ENCODE measurements at regions of chr11 and their contacts with region 1.

Region 1: GRCh38 chr11:44775366-44775984 is 48.7 kb downstream of the TSPAN18 start:
- DNase-seq: peak; percentile 74
- ATAC-seq: peak; percentile 77
- H3K4me3 Mint-ChIP-seq: no peak overlapping the region
- H3K27ac Mint-ChIP-seq: no peak overlapping the region
- H3K4me1 Mint-ChIP-seq: no peaks in the 10 kb centered on the region
- H3K27me3 Mint-ChIP-seq: peaks cover 4% of the 10 kb centered on the region
- CTCF ChIP-seq: peak; percentile 81

Region 2: DNA sequence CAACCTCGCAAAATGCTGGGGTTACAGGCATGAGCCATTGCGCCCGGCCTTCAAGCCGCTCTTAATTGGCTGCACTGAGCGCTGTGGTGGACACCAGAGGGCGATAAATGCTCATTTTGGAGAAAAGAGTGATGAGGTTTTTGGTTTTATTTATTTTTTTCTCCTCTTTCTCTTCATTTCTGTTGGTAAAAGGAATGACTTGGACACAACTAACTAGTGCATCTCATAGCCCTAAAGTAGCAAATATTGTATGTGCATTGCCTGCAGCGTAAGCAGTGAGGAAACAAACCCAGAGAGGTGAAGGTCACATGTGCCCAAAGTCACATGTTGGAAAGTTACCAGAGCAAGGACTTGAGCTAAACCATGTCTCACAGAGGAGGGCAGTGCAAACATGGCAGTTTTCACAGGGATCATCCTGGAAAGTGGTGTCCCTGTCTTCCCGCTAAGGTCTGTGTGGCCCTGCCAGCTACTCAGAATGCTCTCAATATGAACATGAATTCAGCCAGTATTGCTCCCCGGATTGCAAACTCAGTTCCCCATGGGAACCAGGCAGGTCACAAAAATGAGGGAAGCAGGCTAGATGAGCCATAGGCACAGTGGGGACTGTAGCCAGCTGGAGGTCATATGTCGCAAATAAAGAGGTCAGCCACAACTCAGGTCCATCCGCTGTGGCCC is 218.6 kb before region 1 on chr11:
- CTCF ChIA-PET with region 1: interaction called, 10 read pairs
- POLR2A ChIA-PET with region 1: no interaction called
- intact Hi-C with region 1: loop called (anchors 5 kb)
- DNase-seq: peak; percentile 85
- ATAC-seq: peak; percentile 66
- H3K4me3 Mint-ChIP-seq: no peak overlapping the region
- H3K27ac Mint-ChIP-seq: peak overlapping the region; percentile 40
- H3K4me1 Mint-ChIP-seq: peaks cover 30% of the 10 kb centered on the region
- H3K27me3 Mint-ChIP-seq: no peaks in the 10 kb centered on the region
- CTCF ChIP-seq: peak; percentile 80

Region 3: GRCh38 chr11:44621140-44621681 is 154.3 kb before region 1 on chr11:
- CTCF ChIA-PET with region 1: interaction called, 13 read pairs
- POLR2A ChIA-PET with region 1: no interaction called
- intact Hi-C with region 1: loop called (anchors 10 kb)
- DNase-seq: peak; percentile 65
- ATAC-seq: peak; percentile 43
- H3K4me3 Mint-ChIP-seq: no peak overlapping the region
- H3K27ac Mint-ChIP-seq: no peak overlapping the region
- H3K4me1 Mint-ChIP-seq: peaks cover 20% of the 10 kb centered on the region
- H3K27me3 Mint-ChIP-seq: no peaks in the 10 kb centered on the region
- CTCF ChIP-seq: peak; percentile 86

Region 4: DNA sequence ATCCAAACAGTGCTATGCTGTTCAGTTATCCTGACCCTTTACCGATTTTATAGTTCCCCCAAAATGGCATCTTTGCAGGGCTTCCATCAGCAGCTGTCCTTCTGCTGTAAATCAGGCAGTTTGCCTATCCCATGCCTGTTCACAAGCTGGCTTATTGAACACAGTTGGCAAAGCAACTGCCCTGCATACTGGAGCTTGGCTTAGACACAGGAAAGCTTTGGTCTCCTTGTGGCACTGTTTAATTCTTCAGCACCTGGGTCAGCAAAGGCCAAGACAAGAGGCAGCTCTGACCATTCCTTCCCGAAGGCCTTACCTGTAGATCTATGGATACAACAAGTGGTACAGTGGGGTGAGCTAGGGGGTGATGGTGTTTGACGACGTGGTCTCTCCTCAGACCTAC is 16.5 kb before region 1 on chr11:
- CTCF ChIA-PET with region 1: interaction called, 10 read pairs
- POLR2A ChIA-PET with region 1: no interaction called
- intact Hi-C with region 1: no loop called
- DNase-seq: no peak
- ATAC-seq: no peak
- H3K4me3 Mint-ChIP-seq: no peak overlapping the region
- H3K27ac Mint-ChIP-seq: no peak overlapping the region
- H3K4me1 Mint-ChIP-seq: peaks cover 7% of the 10 kb centered on the region
- H3K27me3 Mint-ChIP-seq: peaks cover 3% of the 10 kb centered on the region
- CTCF ChIP-seq: no peak

Region 5: GRCh38 chr11:44795803-44796535 is 20.5 kb after region 1 on chr11:
- CTCF ChIA-PET with region 1: interaction called, 10 read pairs
- POLR2A ChIA-PET with region 1: no interaction called
- intact Hi-C with region 1: no loop called
- DNase-seq: no peak
- ATAC-seq: no peak
- H3K4me3 Mint-ChIP-seq: no peak overlapping the region
- H3K27ac Mint-ChIP-seq: no peak overlapping the region
- H3K4me1 Mint-ChIP-seq: no peaks in the 10 kb centered on the region
- H3K27me3 Mint-ChIP-seq: no peaks in the 10 kb centered on the region
- CTCF ChIP-seq: no peak

Region 6: DNA sequence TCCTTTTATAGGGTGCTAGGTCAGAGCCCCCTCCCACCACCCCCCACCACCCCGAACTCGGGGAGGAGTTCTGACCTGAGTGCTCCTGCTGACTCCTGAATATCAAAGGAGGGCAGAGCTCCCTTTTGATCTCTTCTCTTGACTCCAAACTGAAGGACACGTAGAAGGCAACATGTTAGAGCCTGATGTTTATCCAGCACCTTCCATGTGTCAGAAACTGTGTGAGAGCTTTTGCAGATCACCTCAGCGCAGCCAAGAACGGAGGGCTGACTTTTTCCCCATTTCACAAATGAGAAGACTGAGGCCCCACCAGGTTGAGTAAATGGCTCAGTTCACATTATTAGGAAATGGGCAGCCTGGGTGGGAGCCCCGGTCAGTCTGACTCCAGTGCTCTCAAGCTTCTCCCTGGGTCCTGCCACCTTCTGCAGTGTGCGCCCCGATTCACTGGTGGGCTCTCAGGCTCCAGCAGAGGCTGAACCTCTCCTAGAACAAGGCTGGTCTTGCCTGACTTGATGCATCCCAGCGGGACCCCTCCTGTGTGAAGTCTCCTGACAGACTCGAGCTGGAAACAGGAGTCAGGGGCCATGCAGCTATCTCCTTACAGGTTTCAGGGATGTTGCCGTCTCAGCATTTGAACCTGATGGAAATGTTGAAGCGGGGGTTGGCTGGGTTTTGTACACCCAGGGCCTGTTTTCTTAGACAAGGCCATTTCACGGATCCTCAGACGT is 49.7 kb after region 1 on chr11:
- CTCF ChIA-PET with region 1: no interaction called
- POLR2A ChIA-PET with region 1: no interaction called
- intact Hi-C with region 1: no loop called
- DNase-seq: no peak
- ATAC-seq: no peak
- H3K4me3 Mint-ChIP-seq: no peak overlapping the region
- H3K27ac Mint-ChIP-seq: no peak overlapping the region
- H3K4me1 Mint-ChIP-seq: no peaks in the 10 kb centered on the region
- H3K27me3 Mint-ChIP-seq: no peaks in the 10 kb centered on the region
- CTCF ChIP-seq: no peak

Region 7: DNA sequence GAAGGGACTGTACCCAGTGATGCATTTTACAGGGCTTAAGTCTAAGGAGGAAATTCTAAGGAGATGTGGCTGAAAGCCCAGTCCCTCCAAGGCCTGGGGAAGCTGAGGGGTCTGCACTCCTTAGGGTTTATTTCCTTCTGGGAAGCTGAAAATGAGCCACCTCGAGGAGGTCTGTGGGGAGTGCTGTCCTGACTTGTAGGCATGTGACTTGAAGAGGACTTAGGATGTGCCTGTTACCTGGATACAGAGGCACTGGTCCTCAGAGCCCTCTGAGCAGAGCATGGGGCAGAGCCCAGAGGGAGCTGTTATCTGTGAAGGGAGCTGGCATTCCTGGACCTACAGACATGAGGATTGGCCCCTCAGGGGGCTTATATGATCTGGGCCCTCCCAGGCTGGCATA is 98.1 kb after region 1 on chr11:
- CTCF ChIA-PET with region 1: no interaction called
- POLR2A ChIA-PET with region 1: no interaction called
- intact Hi-C with region 1: no loop called
- DNase-seq: no peak
- ATAC-seq: no peak
- H3K4me3 Mint-ChIP-seq: no peak overlapping the region
- H3K27ac Mint-ChIP-seq: no peak overlapping the region
- H3K4me1 Mint-ChIP-seq: peaks cover 7% of the 10 kb centered on the region
- H3K27me3 Mint-ChIP-seq: no peaks in the 10 kb centered on the region
- CTCF ChIP-seq: no peak

Region 8: GRCh38 chr11:44893846-44894617 is 118.6 kb after region 1 on chr11:
- CTCF ChIA-PET with region 1: interaction called, 6 read pairs
- POLR2A ChIA-PET with region 1: no interaction called
- intact Hi-C with region 1: loop called (anchors 5 kb)
- DNase-seq: peak; percentile 69
- ATAC-seq: peak; percentile 89
- H3K4me3 Mint-ChIP-seq: no peak overlapping the region
- H3K27ac Mint-ChIP-seq: no peak overlapping the region
- H3K4me1 Mint-ChIP-seq: no peaks in the 10 kb centered on the region
- H3K27me3 Mint-ChIP-seq: no peaks in the 10 kb centered on the region
- CTCF ChIP-seq: peak; percentile 84

Measured in activated CD8-positive, alpha-beta T cell treated with anti-CD3 and anti-CD28 coated beads for 36 hours (primary cell).